RWPE1 (cell line): ENCODE measurements at regions of chr10 and their contacts with region 1.

Region 1: DNA sequence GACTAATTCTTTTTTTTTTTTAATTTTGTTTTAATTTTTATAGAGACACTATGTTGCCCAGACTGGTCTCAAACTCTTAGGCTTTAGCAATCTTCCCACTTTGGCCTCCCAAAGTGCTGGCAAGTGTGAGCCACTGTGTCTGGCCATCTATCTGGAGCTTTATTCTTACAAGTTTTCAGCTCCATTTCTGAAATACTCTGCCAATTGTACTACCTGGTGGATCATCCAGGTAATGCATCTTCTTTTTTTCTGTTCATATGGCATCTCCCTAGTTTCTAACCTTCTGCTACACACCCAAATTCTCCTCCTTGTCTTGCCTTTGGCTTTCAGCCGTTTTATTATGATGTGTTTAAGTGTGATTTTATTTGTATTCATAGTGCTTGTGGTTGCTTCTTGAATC is 40.2 kb downstream of the ZNF365 start:
- DNase-seq: no peak
- H3K27ac ChIP-seq: no peak overlapping the region
- CTCF ChIP-seq: no peak

Region 2: DNA sequence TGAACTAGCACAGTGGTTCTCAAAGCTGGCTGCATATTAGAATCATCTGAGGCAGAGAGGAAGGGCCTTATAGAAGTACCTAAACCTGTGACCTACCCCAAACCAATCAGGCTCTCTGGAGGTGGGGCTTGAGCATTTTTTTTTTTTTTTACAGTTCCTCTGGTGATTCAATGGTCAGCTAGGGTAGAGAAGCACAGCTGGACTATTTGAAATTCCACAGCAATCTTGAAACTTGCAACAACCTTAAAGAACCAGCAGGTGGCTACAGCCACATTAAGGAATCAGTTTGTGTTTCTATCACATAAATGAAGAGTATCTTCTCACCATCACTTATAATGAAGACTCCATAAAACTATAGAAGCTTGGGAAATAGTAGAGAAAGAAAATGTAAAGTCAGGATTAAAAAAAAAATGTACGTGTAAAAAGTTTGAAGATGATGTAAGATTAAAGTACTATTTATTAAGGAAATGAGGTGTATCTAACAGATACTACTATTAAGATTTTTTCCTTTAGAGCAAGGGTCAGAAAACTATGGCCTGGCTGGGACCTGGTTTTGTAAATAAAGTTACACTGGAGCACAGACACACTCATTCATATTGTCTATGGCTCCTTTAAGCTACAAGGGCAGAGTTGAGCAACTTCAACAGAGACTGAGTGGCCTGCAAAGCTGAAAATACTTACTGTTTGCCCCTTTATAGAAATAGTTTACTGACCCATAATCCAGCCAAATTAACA is 149.5 kb before region 1 on chr10:
- CTCF ChIA-PET with region 1: interaction called, 16 read pairs
- POLR2A ChIA-PET with region 1: no interaction called
- DNase-seq: peak; percentile 64
- H3K27ac ChIP-seq: no peak overlapping the region
- CTCF ChIP-seq: peak; percentile 75